ENCODE measurements at regions of chr3 and their contacts with region 1.

Region 1: DNA sequence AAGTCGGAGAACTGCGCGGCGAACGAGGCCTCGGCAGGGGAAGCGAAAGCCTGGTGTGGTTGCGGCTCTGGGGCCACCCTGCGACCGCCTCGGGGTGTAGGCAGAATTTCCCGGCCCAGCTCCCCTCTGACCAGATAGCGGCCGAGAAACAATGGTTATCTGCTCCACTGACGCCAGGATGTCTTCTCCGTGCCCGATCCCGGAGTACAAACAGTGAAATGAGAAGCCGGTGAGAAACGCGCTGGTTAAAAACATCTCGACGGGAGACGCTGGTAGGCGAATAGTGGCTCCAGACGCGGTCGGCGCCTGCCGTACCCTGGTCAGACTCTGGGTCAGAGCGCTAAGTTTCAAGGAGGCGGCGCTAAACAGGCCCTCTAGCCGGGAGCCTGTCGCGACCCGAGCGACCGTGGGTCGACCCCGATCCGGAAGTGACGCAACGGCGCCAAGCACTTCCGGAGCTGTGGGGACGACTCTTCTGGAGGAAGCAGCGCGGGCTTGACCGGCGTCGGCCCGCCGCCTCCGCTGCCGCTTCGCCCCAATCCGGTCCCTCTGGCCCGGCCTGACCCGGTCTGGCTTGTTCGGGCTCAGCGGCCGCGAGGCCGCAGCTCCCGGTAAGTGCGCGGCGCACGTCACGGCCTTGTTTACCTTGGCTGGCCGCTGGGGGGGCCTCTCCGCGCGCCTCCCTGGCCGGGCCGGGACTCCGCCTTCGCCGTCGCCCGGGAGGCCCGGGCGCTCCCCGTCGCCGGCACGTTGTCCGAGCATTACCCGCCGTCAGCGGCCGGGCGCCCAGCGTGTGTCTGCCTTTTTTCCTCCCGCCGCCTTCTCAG is at the start of gene ARIH2:
- DNase-seq: peak; percentile 94 to 97 (median 95)
- ATAC-seq: peak; percentile 97 to 98 (median 98)
- H3K4me3 ChIP-seq: peak within 1 kb of the TSS; percentile 64 to 100 (median 90)
- H3K27ac ChIP-seq: peak within 1 kb of the TSS; percentile 93 to 99 (median 97)
- H3K4me1 ChIP-seq: peaks cover 4 to 44% (median 29%) of the 10 kb centered on the region in 12 donors
- H3K27me3 ChIP-seq: no peaks in the 10 kb centered on the region
- CTCF ChIP-seq: peak in 6 of 12 donors; percentile 6 to 35 (median 20)
- POLR2A ChIP-seq: peak in 1 of 2 donors; percentile 85
- total RNA-seq, gene ARIH2: 87.7 to 223 (median 126) TPM

Region 2: GRCh38 chr3:48820612-48821324 is 97.8 kb before region 1 on chr3:
- intact Hi-C with region 1: no loop called
- DNase-seq: peak in 2 of 5 donors; percentile 16 to 29
- ATAC-seq: peak; percentile 22 to 75 (median 69)
- H3K4me3 ChIP-seq: no peak overlapping the region
- H3K27ac ChIP-seq: peak overlapping the region in 9 of 12 donors; percentile 5 to 63 (median 41)
- H3K4me1 ChIP-seq: peaks cover 0 to 29% (median 19%) of the 10 kb centered on the region in 12 donors
- H3K27me3 ChIP-seq: no peaks in the 10 kb centered on the region
- CTCF ChIP-seq: no peak
- POLR2A ChIP-seq: no peak

Region 3: GRCh38 chr3:48847504-48848423 is 70.8 kb before region 1 on chr3 and contains the start of gene PRKAR2A:
- intact Hi-C with region 1: loop called in 2 of 10 experiments (anchors 5 to 10 kb)
- DNase-seq: peak; percentile 90 to 95 (median 93)
- ATAC-seq: peak; percentile 88 to 97 (median 96)
- H3K4me3 ChIP-seq: peak within 1 kb of the TSS; percentile 65 to 94 (median 84)
- H3K27ac ChIP-seq: peak within 1 kb of the TSS; percentile 91 to 99 (median 95)
- H3K4me1 ChIP-seq: peaks cover 10 to 30% (median 20%) of the 10 kb centered on the region in 12 donors
- H3K27me3 ChIP-seq: no peaks in the 10 kb centered on the region
- CTCF ChIP-seq: no peak
- POLR2A ChIP-seq: peak; percentile 20 to 90
- total RNA-seq, gene PRKAR2A: 33.2 to 71.6 (median 44.9) TPM

Region 4: DNA sequence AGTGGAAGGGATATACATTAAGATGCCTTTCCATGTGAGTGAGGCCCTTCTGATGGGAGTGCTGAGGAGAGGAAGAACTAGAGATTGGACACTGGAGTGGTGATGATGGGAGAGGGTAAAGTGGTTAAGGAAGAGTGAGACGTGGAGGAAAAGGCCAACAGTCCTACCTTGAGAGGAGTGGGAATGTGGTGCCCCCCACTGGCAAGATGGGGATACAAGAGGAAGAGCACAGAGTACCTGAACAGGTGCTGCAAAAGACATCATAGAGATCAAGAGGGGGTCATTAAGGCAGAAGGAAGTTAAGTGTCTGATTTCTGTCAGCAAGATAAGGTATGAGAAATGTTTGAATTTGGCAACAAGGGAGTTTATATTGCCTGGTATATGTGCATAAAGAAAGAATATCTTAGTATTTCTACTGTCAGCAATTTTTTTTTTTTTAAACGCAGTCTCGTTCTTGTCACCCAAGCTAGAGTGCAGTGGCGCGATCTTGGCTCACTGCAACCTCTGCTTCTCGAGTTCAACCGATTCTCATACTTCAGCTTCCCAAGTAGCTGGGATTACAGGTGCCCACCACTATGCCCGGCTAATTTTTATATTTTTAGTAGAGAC is 34.0 kb after region 1 on chr3:
- intact Hi-C with region 1: loop called in 1 of 10 experiments (anchors 5 kb)
- DNase-seq: peak in 1 of 5 donors; percentile 36
- ATAC-seq: peak in 3 of 4 donors; percentile 34 to 64 (median 37)
- H3K4me3 ChIP-seq: no peak overlapping the region
- H3K27ac ChIP-seq: no peak overlapping the region
- H3K4me1 ChIP-seq: peaks cover 0 to 34% (median 9%) of the 10 kb centered on the region in 12 donors
- H3K27me3 ChIP-seq: no peaks in the 10 kb centered on the region
- CTCF ChIP-seq: peak; percentile 21 to 63 (median 39)
- POLR2A ChIP-seq: no peak

Measured in heart left ventricle (tissue), 16 donors.